Activated naive CD4-positive, alpha-beta T cell treated with anti-CD3 and anti-CD28 coated beads, Interleukin-2, amount 10 ng/mL, durations not matched to agents 7 days and 5 days (primary cell): ENCODE measurements at regions of chr2 and their contacts with region 1.

Region 1: DNA sequence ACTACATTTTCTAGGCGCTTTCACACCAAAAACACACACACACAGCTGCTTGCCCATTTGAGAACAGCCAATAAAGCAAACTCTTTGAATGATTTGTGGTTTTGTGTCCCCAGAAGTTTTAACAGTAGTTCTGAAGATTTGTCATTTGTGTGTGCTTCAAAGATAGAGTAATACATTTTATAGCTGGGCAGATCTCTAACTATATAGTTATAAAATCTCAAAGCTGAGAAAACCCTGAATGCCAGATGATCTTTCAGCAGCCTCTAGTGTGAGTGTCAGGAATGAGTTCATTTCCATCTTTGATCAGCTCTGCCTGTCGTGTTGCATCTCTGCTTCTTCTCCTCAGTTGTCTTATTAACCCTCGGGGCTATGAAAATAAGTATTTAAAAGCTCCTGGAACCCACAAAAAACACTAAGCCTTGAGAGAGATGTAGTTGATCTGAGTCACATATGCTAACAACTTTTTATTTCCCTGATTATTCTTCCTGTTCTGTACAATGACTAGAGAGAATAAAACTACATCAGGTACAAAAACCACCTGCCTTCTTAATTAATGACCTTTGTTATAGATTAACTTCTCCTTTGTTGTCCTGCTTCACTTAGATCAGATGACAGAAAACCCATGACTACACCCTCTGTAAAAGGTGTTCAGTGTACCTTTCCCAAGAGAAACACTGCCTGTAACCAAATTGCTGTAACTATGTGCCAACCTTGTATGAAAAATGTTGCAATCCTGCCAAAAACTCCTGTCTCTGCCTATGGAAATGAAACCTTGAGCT is 30.0 kb upstream of the SLC3A1 start:
- DNase-seq: no peak
- H3K4me3 Mint-ChIP-seq: no peak overlapping the region
- H3K27ac Mint-ChIP-seq: no peak overlapping the region
- H3K4me1 Mint-ChIP-seq: peaks cover 8% of the 10 kb centered on the region
- H3K27me3 Mint-ChIP-seq: no peaks in the 10 kb centered on the region

Region 2: GRCh38 chr2:44087036-44087713 is 158.1 kb before region 1 on chr2:
- CTCF ChIA-PET with region 1: interaction called, 17 read pairs
- DNase-seq: peak; percentile 88
- H3K4me3 Mint-ChIP-seq: peak overlapping the region; percentile 63
- H3K27ac Mint-ChIP-seq: peak overlapping the region; percentile 78
- H3K4me1 Mint-ChIP-seq: peaks cover 24% of the 10 kb centered on the region
- H3K27me3 Mint-ChIP-seq: no peaks in the 10 kb centered on the region

Region 3: GRCh38 chr2:44668336-44668735 is 423.1 kb after region 1 on chr2:
- CTCF ChIA-PET with region 1: no interaction called
- DNase-seq: no peak
- H3K4me3 Mint-ChIP-seq: no peak overlapping the region
- H3K27ac Mint-ChIP-seq: no peak overlapping the region
- H3K4me1 Mint-ChIP-seq: no peaks in the 10 kb centered on the region
- H3K27me3 Mint-ChIP-seq: no peaks in the 10 kb centered on the region